ENCODE measurements at regions of chr16 and their contacts with region 1.

Region 1: GRCh38 chr16:69417520-69418199 is 6.8 kb upstream of the CYB5B start:
- DNase-seq: no peak
- ATAC-seq: no peak

Region 2: DNA sequence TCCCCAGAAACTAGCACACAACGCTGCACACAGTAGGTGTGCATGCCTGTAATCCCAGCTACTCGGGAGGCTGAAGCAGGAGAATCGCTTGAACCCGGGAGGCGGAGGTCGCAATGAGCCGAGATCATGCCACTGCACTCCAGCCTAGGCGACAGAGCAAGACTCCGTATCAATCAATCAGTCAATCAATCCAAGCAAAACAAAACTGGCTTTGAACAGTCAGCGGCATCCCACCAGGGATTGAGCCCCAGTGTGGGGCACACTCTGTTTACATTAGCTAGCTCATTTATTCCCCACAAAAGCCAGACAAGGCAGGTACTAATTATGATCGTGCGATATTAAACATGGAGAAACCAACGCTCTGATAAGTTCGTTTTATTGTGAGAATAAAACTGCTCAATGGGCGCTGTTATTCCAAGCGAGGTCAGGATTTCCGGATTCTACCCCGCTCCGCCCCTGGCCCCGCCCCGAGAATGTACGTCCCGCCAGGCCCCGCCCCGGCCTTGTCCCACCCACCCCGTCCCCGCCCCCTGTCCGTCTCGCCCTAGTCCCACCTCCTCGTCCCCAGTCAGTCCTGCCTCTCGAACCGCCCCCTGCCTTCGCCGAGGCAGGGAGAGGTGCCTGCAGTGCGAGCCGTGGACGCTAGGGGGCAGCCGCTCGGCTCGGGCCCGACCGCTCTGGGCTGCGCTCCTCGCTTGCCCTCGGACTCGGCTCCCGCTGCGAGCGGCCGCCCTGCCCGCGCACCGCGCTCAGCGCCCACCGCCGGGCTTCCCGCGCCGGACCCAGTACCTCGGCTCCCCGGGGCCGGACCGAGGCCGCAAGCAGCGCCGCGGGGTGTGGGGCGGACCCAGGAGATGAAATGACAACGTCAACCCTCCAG is 106.8 kb before region 1 on chr16 and contains the start of gene VPS4A:
- intact Hi-C with region 1: no loop called
- DNase-seq: peak; percentile 98
- ATAC-seq: peak; percentile 98
- total RNA-seq, gene VPS4A: 24.8 TPM

Region 3: DNA sequence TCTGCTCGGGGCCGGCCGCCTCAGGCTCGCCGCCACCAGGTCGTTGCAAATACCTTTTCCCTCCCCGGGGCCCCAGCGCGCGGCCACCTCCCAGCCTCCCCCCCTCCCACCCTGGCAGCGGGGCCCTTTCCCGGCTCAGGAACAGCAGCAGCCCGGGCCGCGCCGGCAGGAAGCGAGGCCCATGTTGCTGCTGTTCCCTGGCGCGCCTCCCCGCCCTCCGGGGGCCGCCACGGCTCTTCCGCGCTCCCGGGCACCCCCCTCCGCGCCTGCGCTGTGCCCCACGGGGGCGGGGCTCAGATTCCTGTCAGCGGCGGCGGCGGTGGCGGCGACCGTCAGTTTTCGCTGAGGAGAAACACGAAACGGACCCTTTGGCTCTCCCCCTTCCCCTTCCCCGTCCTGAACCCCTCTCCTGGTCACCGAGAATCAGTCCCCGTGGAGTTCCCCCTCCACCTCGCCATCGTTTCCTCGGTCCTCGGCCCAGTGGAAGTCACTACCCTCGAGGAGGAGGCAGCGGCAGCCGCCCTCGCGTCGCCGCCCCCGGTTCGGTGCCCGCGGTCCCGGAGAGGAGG is 148.1 kb after region 1 on chr16 and contains the start of gene NFAT5:
- intact Hi-C with region 1: loop called (anchors 10 kb)
- DNase-seq: peak; percentile 95
- ATAC-seq: peak; percentile 87
- total RNA-seq, gene NFAT5: 87.0 TPM